Right cardiac atrium (tissue), 5 donors: ENCODE measurements at regions of chr3 and their contacts with region 1.

Region 1: GRCh38 chr3:169668957-169669681 is 5.6 kb upstream of the MECOM start:
- DNase-seq: peak; percentile 86 to 94 (median 92)
- ATAC-seq: peak; percentile 98
- H3K4me3 ChIP-seq: peak overlapping the region; percentile 35
- H3K27ac ChIP-seq: no peak overlapping the region
- H3K4me1 ChIP-seq: no peaks in the 10 kb centered on the region
- H3K27me3 ChIP-seq: no peaks in the 10 kb centered on the region

Region 2: DNA sequence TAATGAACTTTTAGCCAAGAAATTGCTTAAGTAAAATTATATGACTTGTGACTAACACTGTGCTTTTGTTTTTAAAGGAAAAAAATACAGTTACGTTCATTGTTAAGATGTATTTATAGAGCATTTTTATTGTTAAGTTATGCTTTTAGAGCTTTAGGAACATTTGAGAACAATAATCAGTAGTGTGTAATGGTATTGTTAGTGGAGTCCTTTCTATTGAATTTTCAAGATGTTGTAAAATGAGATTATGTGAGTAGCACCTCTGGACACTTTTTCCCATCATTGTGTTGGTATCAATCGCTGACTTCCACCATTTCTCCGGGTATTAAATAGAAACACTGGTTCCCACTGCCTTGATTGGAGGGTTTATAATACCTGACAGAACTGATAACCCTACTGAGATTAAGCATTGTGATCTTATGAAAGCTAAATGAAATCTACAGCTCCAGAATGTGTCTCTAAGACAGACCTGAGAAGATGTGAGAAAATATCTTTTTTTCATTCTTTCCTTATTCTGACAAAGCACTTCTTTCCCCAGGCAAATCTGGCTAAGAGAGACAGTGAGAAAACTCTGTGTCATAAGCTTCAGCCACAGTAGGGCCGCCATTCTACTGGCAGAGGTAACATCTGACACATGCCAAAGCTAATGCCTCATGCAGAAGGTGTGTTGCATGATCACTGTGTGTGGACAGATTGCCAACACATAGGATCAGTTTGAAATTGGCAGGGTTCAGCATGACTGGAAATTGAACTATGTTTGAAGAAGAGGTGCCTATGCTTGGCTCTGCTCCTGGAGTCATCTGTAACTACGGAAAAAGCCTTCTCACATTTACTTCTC is 616.4 kb before region 1 on chr3:
- intact Hi-C with region 1: loop called in 2 of 4 experiments (anchors 10 kb)
- DNase-seq: no peak
- ATAC-seq: no peak
- H3K4me3 ChIP-seq: no peak overlapping the region
- H3K27ac ChIP-seq: no peak overlapping the region
- H3K4me1 ChIP-seq: no peaks in the 10 kb centered on the region
- H3K27me3 ChIP-seq: no peaks in the 10 kb centered on the region

Region 3: DNA sequence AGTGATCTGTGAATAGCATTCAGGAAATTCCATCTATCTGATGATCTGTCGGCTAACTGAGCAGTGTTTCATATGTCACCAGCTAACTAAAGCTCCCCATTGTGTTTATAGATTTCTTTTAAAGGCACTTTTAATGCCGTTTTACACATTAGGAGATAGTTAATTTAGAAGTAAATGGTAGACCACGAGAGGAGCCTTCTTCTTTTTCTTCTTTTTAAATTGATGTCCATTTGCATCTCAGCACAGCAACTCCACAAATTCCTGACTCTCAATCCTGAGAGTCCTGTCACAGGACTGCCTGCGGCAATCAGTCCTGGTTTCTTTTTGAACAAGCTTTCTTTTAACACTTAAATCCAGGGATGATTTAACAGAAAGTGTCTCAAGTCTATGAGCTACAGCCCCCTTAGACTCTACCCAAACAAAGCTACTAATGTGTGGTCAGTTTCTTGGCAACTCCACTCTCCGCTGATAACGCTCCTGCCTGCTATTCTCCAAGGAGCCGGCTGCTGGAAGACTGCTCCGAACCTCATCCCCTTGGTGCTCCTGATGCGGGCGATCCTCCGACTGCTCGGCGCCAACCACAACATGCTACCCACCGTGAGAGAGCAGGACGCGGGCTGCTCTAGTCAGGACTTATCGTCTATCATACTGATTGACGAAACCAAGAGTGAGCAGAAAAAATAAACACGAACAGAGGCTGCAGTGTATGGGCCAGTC is 427.0 kb before region 1 on chr3:
- intact Hi-C with region 1: loop called in 1 of 4 experiments (anchors 10 kb)
- DNase-seq: peak; percentile 75 to 94 (median 91)
- ATAC-seq: peak; percentile 93 to 97
- H3K4me3 ChIP-seq: peak overlapping the region; percentile 55
- H3K27ac ChIP-seq: peak overlapping the region; percentile 37
- H3K4me1 ChIP-seq: peaks cover 1% of the 10 kb centered on the region
- H3K27me3 ChIP-seq: no peaks in the 10 kb centered on the region

Region 4: DNA sequence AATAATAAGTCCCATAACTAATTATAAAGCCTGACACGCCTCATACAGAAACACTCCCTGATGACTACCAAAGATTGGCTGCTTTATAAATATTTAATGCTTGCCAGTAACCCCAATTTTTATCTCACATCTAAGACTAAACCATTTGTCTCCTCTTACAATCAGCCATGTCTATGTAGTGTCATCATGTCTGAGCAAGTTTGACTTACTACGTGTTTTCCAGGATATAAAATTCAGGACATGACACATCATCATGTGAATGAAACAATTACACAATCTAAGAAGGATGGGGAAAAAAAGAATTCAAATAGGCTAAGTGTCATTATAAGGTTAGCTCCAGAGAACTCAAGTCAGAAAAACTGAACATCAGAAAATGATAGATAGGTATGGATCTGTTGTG is 214.3 kb before region 1 on chr3:
- intact Hi-C with region 1: loop called in 1 of 4 experiments (anchors 10 kb)
- DNase-seq: no peak
- ATAC-seq: peak; percentile 57 to 82
- H3K4me3 ChIP-seq: no peak overlapping the region
- H3K27ac ChIP-seq: no peak overlapping the region
- H3K4me1 ChIP-seq: peaks cover 4% of the 10 kb centered on the region
- H3K27me3 ChIP-seq: no peaks in the 10 kb centered on the region

Region 5: DNA sequence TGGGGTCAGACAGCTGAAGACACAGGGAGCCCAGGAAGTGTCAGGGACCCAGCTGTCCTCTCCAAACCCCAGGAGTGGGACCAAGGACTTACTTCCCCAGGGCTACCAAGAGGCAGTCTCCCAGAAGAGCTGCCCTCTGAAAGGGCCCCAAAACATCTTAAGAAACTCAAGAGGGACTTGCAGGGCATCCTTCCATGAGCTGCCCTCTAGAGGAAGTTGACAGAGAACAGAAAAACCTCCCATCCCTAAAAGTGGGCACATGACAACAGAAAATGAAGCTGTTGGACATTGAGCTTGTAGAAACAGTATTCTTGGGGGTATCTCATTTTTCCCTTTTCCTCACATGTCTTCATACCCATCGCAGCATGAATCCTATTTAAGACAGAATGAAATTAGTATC is 64.6 kb before region 1 on chr3:
- intact Hi-C with region 1: no loop called
- DNase-seq: no peak
- ATAC-seq: no peak
- H3K4me3 ChIP-seq: no peak overlapping the region
- H3K27ac ChIP-seq: no peak overlapping the region
- H3K4me1 ChIP-seq: no peaks in the 10 kb centered on the region
- H3K27me3 ChIP-seq: no peaks in the 10 kb centered on the region